Endothelial cell of umbilical vein (primary cell): ENCODE measurements at regions of chr10 and their contacts with region 1.

Region 1: GRCh38 chr10:25080880-25081581 is 64.6 kb downstream of the THNSL1 start:
- DNase-seq: peak; percentile 93
- H3K4me3 ChIP-seq: no peak overlapping the region
- H3K27ac ChIP-seq: no peak overlapping the region
- H3K4me1 ChIP-seq: no peaks in the 10 kb centered on the region
- H3K27me3 ChIP-seq: peaks cover 0 to 2% of the 10 kb centered on the region in 2 experiments
- CTCF ChIP-seq: peak; percentile 80 to 91
- POLR2A ChIP-seq: no peak

Region 2: DNA sequence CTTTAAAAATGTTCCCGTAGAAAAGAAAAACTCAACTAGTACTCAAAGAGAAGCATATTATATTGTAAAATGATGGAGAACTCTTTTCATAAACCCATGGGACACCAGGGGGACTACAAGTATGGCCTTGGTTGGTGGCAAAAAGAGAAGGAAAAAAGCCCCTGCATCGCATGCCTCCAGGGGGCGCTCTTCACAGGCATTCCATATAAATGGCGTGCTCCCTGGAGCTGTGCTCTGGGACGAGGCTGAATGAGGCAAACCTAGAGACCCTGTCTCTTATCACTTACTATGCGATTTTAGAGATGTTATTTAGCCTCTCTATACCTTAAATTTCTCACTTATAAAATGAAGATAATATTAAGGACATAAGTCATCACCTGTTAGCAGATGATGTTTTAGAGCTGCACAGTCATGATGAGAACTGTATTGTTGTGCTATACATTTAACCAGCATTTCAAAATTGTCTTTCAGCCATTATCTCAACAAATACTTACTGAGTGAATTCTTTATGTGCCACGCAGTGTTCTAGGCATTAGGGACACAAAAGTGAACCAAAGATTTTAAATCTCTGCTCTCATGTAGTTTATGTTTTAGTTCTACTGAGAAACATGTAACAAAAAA is 463.1 kb before region 1 on chr10:
- CTCF ChIA-PET with region 1: interaction called, 79 read pairs
- POLR2A ChIA-PET with region 1: no interaction called
- dilution Hi-C with region 1: no loop called
- intact Hi-C with region 1: loop called (anchors 1 kb)
- DNase-seq: peak; percentile 59
- H3K4me3 ChIP-seq: no peak overlapping the region
- H3K27ac ChIP-seq: no peak overlapping the region
- H3K4me1 ChIP-seq: no peaks in the 10 kb centered on the region
- H3K27me3 ChIP-seq: no peaks in the 10 kb centered on the region
- CTCF ChIP-seq: peak; percentile 82 to 87
- POLR2A ChIP-seq: no peak

Region 3: DNA sequence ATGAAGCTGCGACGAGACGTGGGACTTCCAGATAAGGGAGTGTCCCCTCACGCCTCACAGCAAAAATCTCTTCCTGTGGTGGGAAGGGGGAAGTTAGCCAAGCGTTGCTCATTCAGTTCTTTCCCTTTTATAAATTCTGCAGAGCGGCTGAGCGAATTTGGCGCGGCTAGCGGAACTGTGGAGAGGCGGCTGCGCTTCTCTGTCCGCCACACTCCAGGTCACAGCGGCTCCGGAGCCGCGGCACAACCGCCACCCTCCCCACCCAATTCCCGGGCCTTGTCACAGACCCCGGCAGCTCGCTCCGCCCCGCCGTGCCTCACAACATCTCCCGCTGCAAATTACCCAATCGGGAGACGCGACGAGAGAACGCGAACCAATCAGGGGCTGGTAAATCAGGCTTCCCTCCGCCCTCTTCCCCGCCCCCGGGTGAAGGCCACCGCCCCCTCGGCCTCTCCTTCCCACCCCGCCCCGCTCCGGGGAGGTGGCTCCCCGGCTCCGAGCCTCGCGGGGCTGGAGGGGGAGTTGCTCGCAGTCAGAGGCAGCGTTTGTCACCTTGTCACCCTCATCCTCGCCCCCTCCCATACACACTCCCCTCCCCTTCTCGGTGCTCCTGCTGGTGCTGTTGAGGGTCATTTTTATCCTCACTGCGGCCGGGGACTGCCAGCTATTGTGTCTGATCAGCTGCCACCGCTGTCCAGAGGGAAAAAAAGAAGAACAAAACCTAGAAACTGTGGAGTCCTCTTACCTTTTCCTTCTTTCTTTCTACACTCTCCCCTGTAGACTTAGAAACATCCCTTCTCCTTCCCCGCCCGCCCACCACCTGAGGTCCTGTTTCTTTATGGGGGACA is 356.4 kb before region 1 on chr10:
- CTCF ChIA-PET with region 1: interaction called, 21 read pairs
- POLR2A ChIA-PET with region 1: no interaction called
- dilution Hi-C with region 1: no loop called
- intact Hi-C with region 1: loop called (anchors 1 kb)
- DNase-seq: peak; percentile 97
- H3K4me3 ChIP-seq: peak overlapping the region; percentile 50 to 95 (median 92)
- H3K27ac ChIP-seq: peak overlapping the region; percentile 78
- H3K4me1 ChIP-seq: peaks cover 26% of the 10 kb centered on the region
- H3K27me3 ChIP-seq: no peaks in the 10 kb centered on the region
- CTCF ChIP-seq: no peak
- POLR2A ChIP-seq: peak; percentile 94

Region 4: GRCh38 chr10:24989867-24990266 is 91.2 kb before region 1 on chr10:
- CTCF ChIA-PET with region 1: interaction called, 10 read pairs
- POLR2A ChIA-PET with region 1: interaction called, 3 read pairs
- dilution Hi-C with region 1: no loop called
- intact Hi-C with region 1: loop called (anchors 1 kb)
- DNase-seq: peak; percentile 16
- H3K4me3 ChIP-seq: no peak overlapping the region
- H3K27ac ChIP-seq: no peak overlapping the region
- H3K4me1 ChIP-seq: peaks cover 5% of the 10 kb centered on the region
- H3K27me3 ChIP-seq: no peaks in the 10 kb centered on the region
- CTCF ChIP-seq: no peak
- POLR2A ChIP-seq: no peak

Region 5: DNA sequence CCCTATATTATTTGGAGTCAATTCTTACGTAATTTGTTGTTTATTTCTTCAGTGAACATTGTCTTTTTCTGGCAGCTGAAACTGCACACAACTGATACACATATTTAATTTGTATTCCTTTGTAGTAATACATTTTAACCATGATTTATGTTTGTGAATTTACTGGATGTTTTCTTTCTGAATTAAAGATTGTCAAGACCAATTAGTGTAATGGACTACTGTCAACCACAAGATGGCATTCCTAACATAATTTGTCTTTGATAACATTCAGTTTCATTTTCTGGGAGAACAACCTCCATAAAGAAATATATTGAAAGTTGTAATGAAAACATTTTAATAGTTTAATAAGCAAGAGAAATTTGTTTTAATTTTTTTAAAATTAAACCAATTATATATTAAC is 54.6 kb before region 1 on chr10:
- CTCF ChIA-PET with region 1: interaction called, 117 read pairs
- POLR2A ChIA-PET with region 1: interaction called, 3 read pairs
- dilution Hi-C with region 1: no loop called
- intact Hi-C with region 1: loop called (anchors 1 kb)
- DNase-seq: peak; percentile 49
- H3K4me3 ChIP-seq: no peak overlapping the region
- H3K27ac ChIP-seq: no peak overlapping the region
- H3K4me1 ChIP-seq: peaks cover 24% of the 10 kb centered on the region
- H3K27me3 ChIP-seq: no peaks in the 10 kb centered on the region
- CTCF ChIP-seq: peak; percentile 17 to 18
- POLR2A ChIP-seq: no peak

Region 6: GRCh38 chr10:25056726-25057125 is 24.3 kb before region 1 on chr10:
- CTCF ChIA-PET with region 1: interaction called, 11 read pairs
- POLR2A ChIA-PET with region 1: no interaction called
- dilution Hi-C with region 1: no loop called
- intact Hi-C with region 1: no loop called
- DNase-seq: no peak
- H3K4me3 ChIP-seq: no peak overlapping the region
- H3K27ac ChIP-seq: no peak overlapping the region
- H3K4me1 ChIP-seq: peaks cover 23% of the 10 kb centered on the region
- H3K27me3 ChIP-seq: no peaks in the 10 kb centered on the region
- CTCF ChIP-seq: no peak
- POLR2A ChIP-seq: no peak

Region 7: GRCh38 chr10:25113191-25114035 is 32.4 kb after region 1 on chr10:
- CTCF ChIA-PET with region 1: interaction called, 11 read pairs
- POLR2A ChIA-PET with region 1: no interaction called
- dilution Hi-C with region 1: no loop called
- intact Hi-C with region 1: no loop called
- DNase-seq: peak; percentile 64
- H3K4me3 ChIP-seq: no peak overlapping the region
- H3K27ac ChIP-seq: no peak overlapping the region
- H3K4me1 ChIP-seq: no peaks in the 10 kb centered on the region
- H3K27me3 ChIP-seq: peaks cover 0 to 4% of the 10 kb centered on the region in 2 experiments
- CTCF ChIP-seq: peak; percentile 82 to 86
- POLR2A ChIP-seq: no peak